ENCODE measurements at regions of chr17 and their contacts with region 1.

Region 1: GRCh38 chr17:57597531-57598453 is 147.3 kb downstream of the CCDC182 start:
- DNase-seq: no peak
- CTCF ChIP-seq: peak; percentile 75

Region 2: DNA sequence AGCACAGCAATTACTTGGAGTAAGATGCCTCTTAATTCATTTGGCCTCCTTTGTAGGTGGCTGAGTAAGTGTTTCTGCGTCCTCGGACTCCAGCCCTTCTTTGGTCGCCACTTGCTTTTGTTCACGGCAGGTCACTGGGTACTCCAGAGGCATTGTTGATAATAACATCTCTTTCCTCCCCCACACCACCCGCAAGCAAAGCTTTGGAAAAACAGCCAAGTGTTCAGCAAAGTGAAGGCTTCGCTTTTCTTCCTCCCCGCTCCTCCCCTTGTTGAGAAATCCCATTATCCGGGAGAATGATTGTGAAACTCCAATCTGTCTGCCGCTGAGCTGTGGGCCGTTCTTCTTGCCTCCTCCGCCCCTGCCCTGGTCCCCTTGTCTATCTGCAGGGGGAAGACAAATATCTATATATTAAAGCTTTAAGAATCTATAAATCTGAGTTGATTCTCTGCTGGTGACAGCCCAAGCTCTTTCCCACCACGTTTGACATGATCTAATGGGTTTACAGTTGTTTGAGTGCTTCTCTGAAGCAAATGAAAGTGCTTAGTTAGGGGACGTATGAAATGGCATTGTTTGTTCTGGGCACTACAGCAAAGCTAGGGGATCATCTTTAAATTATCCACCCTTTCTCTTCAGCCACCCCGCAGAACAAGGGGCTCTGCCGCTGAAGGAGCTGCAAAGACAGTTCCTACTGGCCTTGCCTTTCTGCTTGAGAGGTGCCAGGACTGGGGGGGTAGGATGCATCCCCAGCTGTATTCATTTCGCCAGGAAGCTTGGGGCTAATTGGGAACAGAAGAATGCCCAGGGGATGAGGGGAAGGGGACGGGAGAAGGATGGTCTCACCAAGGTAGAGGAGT is 19.8 kb before region 1 on chr17:
- CTCF ChIA-PET with region 1: interaction called, 15 read pairs
- POLR2A ChIA-PET with region 1: no interaction called
- DNase-seq: no peak
- CTCF ChIP-seq: no peak

Region 3: GRCh38 chr17:57622683-57623433 is 25.1 kb after region 1 on chr17:
- CTCF ChIA-PET with region 1: interaction called, 11 read pairs
- POLR2A ChIA-PET with region 1: no interaction called
- DNase-seq: peak; percentile 70
- CTCF ChIP-seq: no peak

Region 4: GRCh38 chr17:57833179-57833939 is 235.6 kb after region 1 on chr17:
- CTCF ChIA-PET with region 1: no interaction called
- POLR2A ChIA-PET with region 1: no interaction called
- DNase-seq: peak; percentile 69
- CTCF ChIP-seq: peak; percentile 90